ENCODE measurements at regions of chr7 and their contacts with region 1.

Region 1: DNA sequence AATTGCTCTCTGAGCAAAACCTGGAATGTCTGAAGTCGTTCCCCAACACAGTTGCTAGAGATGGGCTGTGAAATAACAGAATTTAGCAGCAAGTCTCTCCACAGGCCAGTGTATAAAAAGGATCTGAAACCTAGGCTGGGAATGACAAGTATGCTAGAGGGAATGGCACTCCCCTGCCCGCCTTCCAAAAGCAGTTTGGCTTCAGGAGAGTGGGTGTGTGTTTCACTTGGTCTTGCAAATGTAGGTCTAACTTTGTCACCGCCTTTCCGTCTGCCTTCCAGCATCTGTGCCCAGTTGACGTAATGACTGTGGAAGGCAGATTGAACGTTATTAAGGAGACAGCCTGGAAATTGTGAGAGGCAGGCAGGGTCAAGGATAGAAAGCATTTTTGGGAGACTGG is 18.0 kb upstream of the MTURN start:
- DNase-seq: peak; percentile 32 to 77
- ATAC-seq: peak; percentile 94 to 98
- H3K4me3 ChIP-seq: no peak overlapping the region
- H3K27ac ChIP-seq: peak overlapping the region in 2 of 4 donors; percentile 49 to 56
- H3K4me1 ChIP-seq: peaks cover 8 to 12% of the 10 kb centered on the region in 2 donors
- H3K27me3 ChIP-seq: no peaks in the 10 kb centered on the region
- CTCF ChIP-seq: no peak
- POLR2A ChIP-seq: no peak

Region 2: DNA sequence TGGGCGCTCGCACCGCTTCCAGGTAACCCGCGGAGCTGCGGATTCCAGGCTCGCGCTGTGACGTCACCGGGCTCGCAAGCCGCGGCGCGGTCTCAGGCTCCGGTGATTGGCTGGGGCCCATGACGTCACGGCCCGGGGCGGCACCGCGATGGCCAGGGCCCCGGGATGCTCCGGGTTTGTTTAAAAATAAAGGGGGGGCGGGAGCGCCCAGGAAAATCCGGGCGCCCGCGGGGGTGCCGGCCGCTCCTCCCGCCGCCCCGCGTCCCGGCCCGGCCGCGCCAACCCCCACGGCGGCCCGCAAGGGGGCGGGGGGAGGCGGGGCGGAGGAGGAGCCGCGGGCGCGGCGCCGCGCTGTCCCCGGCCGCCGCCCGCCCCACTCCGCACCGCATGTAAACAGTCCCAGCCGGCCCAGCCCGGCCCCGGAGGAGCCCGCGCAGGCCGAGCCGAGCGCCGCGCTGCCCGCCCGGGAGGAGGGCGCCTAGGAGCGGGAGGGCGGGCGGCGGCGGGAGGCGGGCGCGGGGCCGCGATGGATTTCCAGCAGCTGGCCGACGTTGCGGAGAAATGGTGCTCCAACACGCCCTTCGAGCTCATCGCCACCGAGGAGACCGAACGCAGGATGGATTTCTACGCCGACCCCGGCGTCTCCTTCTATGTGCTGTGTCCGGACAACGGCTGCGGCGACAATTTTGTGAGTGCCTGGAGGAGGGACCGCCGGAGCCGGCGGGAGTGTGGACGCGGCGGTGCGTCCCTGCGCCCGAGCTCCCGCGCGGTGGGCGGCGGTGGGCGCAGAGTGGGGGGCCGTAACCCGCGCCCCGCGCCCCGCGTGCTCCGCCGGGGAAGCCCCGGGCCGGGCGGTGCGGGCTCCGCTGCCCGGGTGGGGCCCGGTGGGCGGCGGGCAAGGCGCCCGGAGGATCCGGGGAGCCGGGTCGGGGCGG is 18.1 kb after region 1 on chr7 and contains the start of gene MTURN:
- in situ Hi-C with region 1: no loop called
- intact Hi-C with region 1: loop called (anchors 2 kb)
- DNase-seq: peak; percentile 74 to 81
- ATAC-seq: peak; percentile 88 to 89
- H3K4me3 ChIP-seq: peak within 1 kb of the TSS; percentile 83 to 88 (median 86)
- H3K27ac ChIP-seq: peak within 1 kb of the TSS; percentile 78 to 95 (median 88)
- H3K4me1 ChIP-seq: peaks cover 13 to 31% of the 10 kb centered on the region in 2 donors
- H3K27me3 ChIP-seq: no peaks in the 10 kb centered on the region
- CTCF ChIP-seq: no peak
- POLR2A ChIP-seq: peak; percentile 59 to 70
- total RNA-seq, gene MTURN: 32.9 to 81.9 (median 44.7) TPM